PC-9 (cell line): ENCODE measurements at regions of chr4 and their contacts with region 1.

Region 1: GRCh38 chr4:5998333-5998936 is 19.8 kb downstream of the C4orf50 start:
- DNase-seq: peak in 1 of 2 experiments; percentile 58
- H3K4me3 ChIP-seq: no peak overlapping the region
- H3K27ac ChIP-seq: no peak overlapping the region
- H3K4me1 ChIP-seq: no peaks in the 10 kb centered on the region
- H3K27me3 ChIP-seq: peaks cover 36% of the 10 kb centered on the region
- CTCF ChIP-seq: peak; percentile 87

Region 2: DNA sequence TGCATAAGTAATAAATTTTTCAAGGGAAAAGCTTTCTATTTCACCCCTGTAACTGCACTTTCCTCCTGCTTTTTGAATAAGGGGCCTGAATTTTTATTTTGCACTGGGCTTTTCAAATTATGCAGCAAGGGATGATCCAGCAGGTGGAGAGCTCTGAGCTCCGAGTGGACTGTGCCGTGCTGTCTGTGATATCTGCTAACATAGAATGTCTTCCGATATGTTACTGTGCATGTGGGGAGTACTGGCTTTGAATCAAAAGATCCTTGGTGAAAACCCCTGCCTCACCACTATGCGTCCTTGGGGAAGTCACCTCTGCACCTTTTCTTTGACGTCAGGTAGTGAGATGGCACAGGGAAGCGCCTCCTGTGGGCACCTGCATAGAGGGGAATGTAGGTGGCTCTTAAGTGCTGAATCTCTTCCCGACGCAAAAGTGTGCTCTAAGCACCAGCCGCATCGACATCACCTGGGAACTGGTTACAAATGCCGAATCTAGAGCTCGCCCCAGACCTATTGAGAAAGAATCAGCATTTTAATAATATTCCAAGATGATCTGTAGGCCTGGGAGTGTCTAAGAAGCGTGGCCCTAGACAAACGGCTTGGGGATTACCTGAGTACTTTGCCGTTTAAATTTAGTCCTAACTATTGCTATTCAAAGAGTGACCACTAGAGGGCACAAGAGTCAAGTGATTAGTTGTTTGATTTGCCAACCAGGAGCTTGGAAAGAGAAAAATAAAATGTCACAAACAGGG is 252.0 kb after region 1 on chr4:
- CTCF ChIA-PET with region 1: interaction called, 4 read pairs
- POLR2A ChIA-PET with region 1: no interaction called
- intact Hi-C with region 1: loop called (anchors 2 kb)
- DNase-seq: peak; percentile 22 to 59
- H3K4me3 ChIP-seq: no peak overlapping the region
- H3K27ac ChIP-seq: no peak overlapping the region
- H3K4me1 ChIP-seq: no peaks in the 10 kb centered on the region
- H3K27me3 ChIP-seq: peaks cover 38% of the 10 kb centered on the region; the same call in 1 of the 2 replicates
- CTCF ChIP-seq: peak; percentile 86